ENCODE measurements at regions of chr4 and their contacts with region 1.

Region 1: DNA sequence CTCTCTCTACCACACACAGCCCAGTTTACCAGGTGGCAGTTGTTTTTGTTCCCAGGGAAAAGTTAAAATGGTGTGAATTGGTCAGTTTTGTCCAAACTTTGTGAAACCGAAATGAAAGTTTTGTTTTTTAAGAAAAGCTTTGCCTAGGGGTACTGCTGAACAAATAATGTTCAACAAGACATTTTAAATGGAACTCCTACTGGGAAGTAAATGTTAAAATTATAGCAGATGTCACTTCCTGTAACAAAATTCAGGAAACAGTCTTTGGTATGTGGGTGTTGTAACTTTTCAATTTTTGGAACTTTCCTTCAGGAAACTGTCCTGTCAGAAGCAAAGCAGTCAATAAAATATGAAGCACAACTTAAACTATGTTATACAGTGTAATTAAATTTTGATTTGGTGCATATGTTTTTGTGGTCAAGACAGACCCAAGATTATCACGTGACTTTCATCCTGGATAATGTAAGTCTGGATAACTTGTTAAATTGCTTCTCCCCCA is 79.5 kb downstream of the AFF1 start:
- DNase-seq: no peak
- ATAC-seq: no peak
- H3K4me3 ChIP-seq: peak overlapping the region; percentile 23
- H3K27ac ChIP-seq: peak overlapping the region; percentile 98
- H3K4me1 ChIP-seq: peaks cover 96% of the 10 kb centered on the region
- H3K27me3 ChIP-seq: no peaks in the 10 kb centered on the region
- CTCF ChIP-seq: no peak

Region 2: GRCh38 chr4:86948276-86948675 is 66.1 kb before region 1 on chr4:
- intact Hi-C with region 1: no loop called
- DNase-seq: no peak
- ATAC-seq: no peak
- H3K4me3 ChIP-seq: no peak overlapping the region
- H3K27ac ChIP-seq: no peak overlapping the region
- H3K4me1 ChIP-seq: peaks cover 34% of the 10 kb centered on the region
- H3K27me3 ChIP-seq: no peaks in the 10 kb centered on the region
- CTCF ChIP-seq: no peak

Region 3: GRCh38 chr4:87030755-87031441 is 16.6 kb after region 1 on chr4:
- intact Hi-C with region 1: loop called in 1 of 2 experiments (anchors 2 kb)
- DNase-seq: no peak
- ATAC-seq: peak in 1 of 4 donors; percentile 16
- H3K4me3 ChIP-seq: peak overlapping the region; percentile 27
- H3K27ac ChIP-seq: peak overlapping the region; percentile 91
- H3K4me1 ChIP-seq: peaks cover 100% of the 10 kb centered on the region
- H3K27me3 ChIP-seq: no peaks in the 10 kb centered on the region
- CTCF ChIP-seq: no peak

Region 4: GRCh38 chr4:87058356-87059073 is 44.2 kb after region 1 on chr4:
- intact Hi-C with region 1: no loop called
- DNase-seq: no peak
- ATAC-seq: peak; percentile 53 to 70 (median 65)
- H3K4me3 ChIP-seq: peak overlapping the region; percentile 14
- H3K27ac ChIP-seq: peak overlapping the region; percentile 87
- H3K4me1 ChIP-seq: peaks cover 86% of the 10 kb centered on the region
- H3K27me3 ChIP-seq: no peaks in the 10 kb centered on the region
- CTCF ChIP-seq: peak; percentile 26

Measured in psoas muscle (tissue), 8 donors.